Endothelial cell of umbilical vein (primary cell): ENCODE measurements at regions of chr18 and their contacts with region 1.

Region 1: DNA sequence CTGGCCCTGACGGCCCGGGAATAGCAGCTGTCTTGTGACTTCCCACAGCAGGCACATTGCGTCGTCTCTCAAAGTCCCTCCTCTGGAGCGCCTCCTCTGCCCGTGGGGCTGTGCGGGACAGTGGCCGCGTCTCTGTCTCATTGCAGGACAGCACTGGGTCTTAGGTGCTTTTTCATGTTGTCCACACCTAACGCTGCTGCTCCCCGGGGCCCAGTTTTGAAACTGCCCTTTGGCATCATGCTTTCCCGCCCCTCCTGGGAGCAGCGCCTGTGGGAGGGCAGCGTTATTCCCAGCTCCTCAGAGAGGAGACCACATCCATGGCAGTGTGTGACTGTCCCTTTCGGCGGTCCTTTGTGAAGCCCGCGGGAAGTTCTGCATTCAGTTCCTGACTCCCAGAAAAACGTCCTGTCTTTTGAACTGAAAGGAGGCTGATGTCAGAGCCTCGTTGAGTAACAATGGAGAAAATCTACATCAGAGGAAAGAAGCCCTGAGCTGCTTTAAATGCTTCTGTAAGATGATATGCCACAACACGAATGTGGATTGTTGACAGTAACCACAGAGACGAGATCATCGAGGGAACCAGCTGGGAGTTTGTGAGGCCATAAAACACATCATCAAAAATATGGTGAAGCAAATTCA is 226.0 kb downstream of the FAM210A start:
- DNase-seq: peak; percentile 83
- H3K4me3 ChIP-seq: no peak overlapping the region
- H3K27ac ChIP-seq: peak overlapping the region; percentile 57
- H3K4me1 ChIP-seq: peaks cover 29% of the 10 kb centered on the region
- H3K27me3 ChIP-seq: peaks cover 0 to 2% of the 10 kb centered on the region in 2 experiments
- CTCF ChIP-seq: no peak
- POLR2A ChIP-seq: no peak

Region 2: GRCh38 chr18:13381944-13382365 is 118.4 kb before region 1 on chr18:
- CTCF ChIA-PET with region 1: no interaction called
- POLR2A ChIA-PET with region 1: no interaction called
- dilution Hi-C with region 1: no loop called
- intact Hi-C with region 1: loop called (anchors 1 kb)
- DNase-seq: peak; percentile 71
- H3K4me3 ChIP-seq: peak overlapping the region in 1 of 3 experiments; percentile 49
- H3K27ac ChIP-seq: peak overlapping the region; percentile 94
- H3K4me1 ChIP-seq: peaks cover 31% of the 10 kb centered on the region
- H3K27me3 ChIP-seq: no peaks in the 10 kb centered on the region
- CTCF ChIP-seq: no peak
- POLR2A ChIP-seq: no peak

Region 3: DNA sequence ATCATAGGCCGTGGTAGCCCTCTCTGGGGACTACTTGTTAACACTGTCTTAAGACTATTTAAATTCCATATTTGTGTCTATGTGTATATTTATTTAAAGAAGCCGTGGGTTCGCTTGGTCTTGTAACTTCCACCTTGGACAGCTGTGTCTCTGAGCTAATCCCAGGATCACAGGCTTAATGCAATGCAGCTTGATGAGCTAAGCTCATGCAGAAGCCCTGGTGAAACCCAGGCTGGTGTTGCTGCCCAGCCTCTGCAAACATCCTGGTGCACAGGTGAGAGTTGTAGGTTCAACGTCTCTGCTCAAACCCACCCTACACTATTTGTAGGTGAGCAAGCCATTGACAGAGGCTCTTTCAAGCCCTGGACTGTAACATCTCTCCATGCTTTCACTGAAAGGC is 14.2 kb after region 1 on chr18:
- CTCF ChIA-PET with region 1: interaction called, 3 read pairs
- POLR2A ChIA-PET with region 1: no interaction called
- dilution Hi-C with region 1: no loop called
- intact Hi-C with region 1: loop called (anchors 1 kb)
- DNase-seq: no peak
- H3K4me3 ChIP-seq: no peak overlapping the region
- H3K27ac ChIP-seq: no peak overlapping the region
- H3K4me1 ChIP-seq: no peaks in the 10 kb centered on the region
- H3K27me3 ChIP-seq: no peaks in the 10 kb centered on the region
- CTCF ChIP-seq: no peak
- POLR2A ChIP-seq: no peak